Natural killer cell (primary cell): ENCODE measurements at regions of chr19 and their contacts with region 1.

Region 1: GRCh38 chr19:50368649-50369570 is 3.5 kb upstream of the NAPSA start:
- DNase-seq: peak; percentile 75 to 91
- ATAC-seq: peak; percentile 78 to 85 (median 79)
- H3K4me3 ChIP-seq: peak overlapping the region; percentile 70
- H3K4me3 Mint-ChIP-seq: peak overlapping the region; percentile 89
- H3K27ac ChIP-seq: peak overlapping the region; percentile 54
- H3K27ac Mint-ChIP-seq: peak overlapping the region; percentile 77 to 88
- H3K4me1 ChIP-seq: peaks cover 36% of the 10 kb centered on the region
- H3K4me1 Mint-ChIP-seq: peaks cover 18 to 20% of the 10 kb centered on the region in 2 donors
- H3K27me3 ChIP-seq: no peaks in the 10 kb centered on the region
- H3K27me3 Mint-ChIP-seq: no peaks in the 10 kb centered on the region
- CTCF ChIP-seq: peak; percentile 68

Region 2: GRCh38 chr19:50266896-50267295 is 102.0 kb before region 1 on chr19:
- intact Hi-C with region 1: no loop called
- DNase-seq: peak in 1 of 2 donors; percentile 32
- ATAC-seq: no peak
- H3K4me3 ChIP-seq: no peak overlapping the region
- H3K4me3 Mint-ChIP-seq: no peak overlapping the region
- H3K27ac ChIP-seq: no peak overlapping the region
- H3K27ac Mint-ChIP-seq: no peak overlapping the region
- H3K4me1 ChIP-seq: no peaks in the 10 kb centered on the region
- H3K4me1 Mint-ChIP-seq: no peaks in the 10 kb centered on the region
- H3K27me3 ChIP-seq: no peaks in the 10 kb centered on the region
- H3K27me3 Mint-ChIP-seq: peaks cover 0 to 9% of the 10 kb centered on the region in 2 donors
- CTCF ChIP-seq: no peak

Region 3: GRCh38 chr19:50329146-50329925 is 39.6 kb before region 1 on chr19 and contains the start of gene KCNC3:
- intact Hi-C with region 1: no loop called
- DNase-seq: peak in 1 of 2 donors; percentile 92
- ATAC-seq: peak; percentile 42 to 76 (median 56)
- H3K4me3 ChIP-seq: no peak within 1 kb of the TSS
- H3K4me3 Mint-ChIP-seq: peak within 1 kb of the TSS; percentile 82
- H3K27ac ChIP-seq: peak within 1 kb of the TSS; percentile 16
- H3K27ac Mint-ChIP-seq: peak within 1 kb of the TSS; percentile 45 to 78
- H3K4me1 ChIP-seq: peaks cover 75% of the 10 kb centered on the region
- H3K4me1 Mint-ChIP-seq: peaks cover 49 to 70% of the 10 kb centered on the region in 2 donors
- H3K27me3 ChIP-seq: peaks cover 55% of the 10 kb centered on the region
- H3K27me3 Mint-ChIP-seq: peaks cover 44 to 64% of the 10 kb centered on the region in 2 donors
- CTCF ChIP-seq: no peak
- total RNA-seq, gene KCNC3: 0.57 to 3.2 (median 0.68) TPM

Region 4: GRCh38 chr19:50414864-50415660 is 46.2 kb after region 1 on chr19:
- intact Hi-C with region 1: loop called (anchors 1 kb)
- DNase-seq: peak; percentile 72 to 83
- ATAC-seq: peak; percentile 78 to 93 (median 92)
- H3K4me3 ChIP-seq: peak overlapping the region; percentile 28
- H3K4me3 Mint-ChIP-seq: no peak overlapping the region
- H3K27ac ChIP-seq: peak overlapping the region; percentile 84
- H3K27ac Mint-ChIP-seq: peak overlapping the region in 1 of 2 donors; percentile 70
- H3K4me1 ChIP-seq: peaks cover 47% of the 10 kb centered on the region
- H3K4me1 Mint-ChIP-seq: peaks cover 9 to 24% of the 10 kb centered on the region in 2 donors
- H3K27me3 ChIP-seq: peaks cover 3% of the 10 kb centered on the region
- H3K27me3 Mint-ChIP-seq: peaks cover 14 to 15% of the 10 kb centered on the region in 2 donors
- CTCF ChIP-seq: peak; percentile 80

Region 5: DNA sequence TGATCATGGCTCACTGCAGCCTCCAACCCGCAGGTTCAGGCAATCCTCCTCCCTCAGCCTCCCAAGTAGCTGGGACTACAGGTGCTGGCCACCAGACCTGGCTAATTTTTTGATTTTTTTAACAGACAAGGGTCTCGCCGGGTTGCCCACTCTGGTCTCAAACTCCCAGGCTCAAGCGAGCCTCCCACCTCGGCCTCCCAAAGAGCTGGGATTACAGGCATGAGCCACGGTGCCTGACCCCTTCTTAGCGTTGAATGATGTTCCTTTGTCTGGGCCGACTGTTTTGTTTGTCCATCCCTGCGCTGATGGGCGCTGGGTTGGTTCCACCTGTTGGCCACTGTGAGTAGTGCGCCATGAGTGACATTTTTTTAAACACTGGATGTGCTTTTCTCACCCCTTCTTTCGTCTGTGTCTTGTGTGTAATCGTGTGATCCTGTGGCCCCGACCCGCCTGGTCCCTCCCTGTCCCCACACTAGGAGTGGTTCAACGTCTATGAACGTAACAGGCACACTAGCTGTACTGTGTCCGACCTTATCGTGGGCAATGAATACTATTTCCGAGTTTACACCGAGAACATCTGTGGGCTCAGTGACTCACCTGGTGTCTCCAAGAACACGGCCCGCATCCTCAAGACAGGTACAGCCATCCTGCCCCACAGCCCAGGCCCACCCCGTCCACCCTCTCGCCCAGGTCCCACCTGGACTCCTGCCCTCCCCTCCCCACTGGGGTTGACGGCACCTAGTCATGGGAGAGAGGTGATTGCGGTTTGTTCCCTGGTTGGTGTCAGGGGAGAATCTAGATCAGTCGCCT is 92.4 kb after region 1 on chr19:
- intact Hi-C with region 1: loop called (anchors 1 kb)
- DNase-seq: peak; percentile 53 to 80
- ATAC-seq: peak; percentile 87 to 97 (median 93)
- H3K4me3 ChIP-seq: no peak overlapping the region
- H3K4me3 Mint-ChIP-seq: no peak overlapping the region
- H3K27ac ChIP-seq: peak overlapping the region; percentile 20
- H3K27ac Mint-ChIP-seq: no peak overlapping the region
- H3K4me1 ChIP-seq: peaks cover 11% of the 10 kb centered on the region
- H3K4me1 Mint-ChIP-seq: peaks cover 0 to 6% of the 10 kb centered on the region in 2 donors
- H3K27me3 ChIP-seq: no peaks in the 10 kb centered on the region
- H3K27me3 Mint-ChIP-seq: peaks cover 0 to 17% of the 10 kb centered on the region in 2 donors
- CTCF ChIP-seq: peak; percentile 70